ENCODE measurements at regions of chr5 and their contacts with region 1.

Region 1: GRCh38 chr5:95620870-95621837 is 1.3 kb downstream of the GPR150 start:
- DNase-seq: no peak
- ATAC-seq: peak; percentile 73
- H3K4me3 ChIP-seq: peak overlapping the region; percentile 52 to 57
- H3K27ac ChIP-seq: peak overlapping the region; percentile 65
- H3K4me1 ChIP-seq: peaks cover 10% of the 10 kb centered on the region
- H3K27me3 ChIP-seq: no peaks in the 10 kb centered on the region
- CTCF ChIP-seq: peak; percentile 13; the same call in 1 of the 2 replicates

Region 2: GRCh38 chr5:95223566-95224258 is 397.4 kb before region 1 on chr5:
- CTCF ChIA-PET with region 1: no interaction called
- POLR2A ChIA-PET with region 1: no interaction called
- in situ Hi-C with region 1: no loop called
- intact Hi-C with region 1: no loop called
- DNase-seq: no peak
- ATAC-seq: no peak
- H3K4me3 ChIP-seq: no peak overlapping the region
- H3K27ac ChIP-seq: no peak overlapping the region
- H3K4me1 ChIP-seq: no peaks in the 10 kb centered on the region
- H3K27me3 ChIP-seq: no peaks in the 10 kb centered on the region; the same call in 1 of the 2 replicates
- CTCF ChIP-seq: no peak

Region 3: DNA sequence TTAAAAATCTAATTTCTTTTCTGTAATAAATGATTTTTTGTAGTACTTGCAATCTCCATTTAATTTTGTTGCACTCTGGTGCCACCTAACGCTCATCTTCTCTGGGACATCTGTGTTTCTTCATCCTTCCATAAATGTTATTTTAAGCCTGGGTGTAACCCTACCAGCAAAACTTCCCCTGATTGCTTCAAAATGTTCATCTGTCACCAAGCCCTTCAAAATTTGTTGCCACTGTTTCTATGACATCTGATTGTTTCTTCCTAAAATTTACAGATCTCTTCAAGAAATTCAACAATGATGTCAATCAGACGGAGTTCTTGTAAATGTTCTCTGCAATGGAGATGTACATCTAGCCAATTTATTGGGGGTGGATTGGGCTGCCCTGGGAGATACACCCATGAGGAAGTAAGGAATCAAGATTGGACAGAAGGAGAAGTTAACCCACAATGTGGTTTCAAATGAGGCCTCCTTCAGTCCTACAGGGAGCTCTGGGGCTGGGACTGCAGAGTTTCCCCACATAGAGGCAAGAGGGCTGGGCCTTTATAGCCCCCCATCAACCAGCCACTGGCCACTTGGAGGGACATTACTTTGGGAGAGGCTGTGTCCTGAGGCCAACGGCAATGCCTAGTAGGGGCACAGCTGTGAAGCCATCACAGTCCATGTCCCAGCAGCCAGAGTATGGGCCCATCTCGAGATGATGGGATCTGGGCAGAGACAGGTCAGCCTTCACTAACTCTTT is 359.5 kb before region 1 on chr5:
- CTCF ChIA-PET with region 1: no interaction called
- POLR2A ChIA-PET with region 1: no interaction called
- in situ Hi-C with region 1: no loop called
- intact Hi-C with region 1: no loop called
- DNase-seq: peak; percentile 48
- ATAC-seq: peak; percentile 73
- H3K4me3 ChIP-seq: no peak overlapping the region
- H3K27ac ChIP-seq: no peak overlapping the region
- H3K4me1 ChIP-seq: no peaks in the 10 kb centered on the region
- H3K27me3 ChIP-seq: no peaks in the 10 kb centered on the region; the same call in 1 of the 2 replicates
- CTCF ChIP-seq: peak; percentile 73

Region 4: GRCh38 chr5:95554647-95555548 is 66.3 kb before region 1 on chr5 and contains the starts of genes ARSK and SKIC3:
- CTCF ChIA-PET with region 1: no interaction called
- POLR2A ChIA-PET with region 1: interaction called, 8 read pairs
- in situ Hi-C with region 1: no loop called
- intact Hi-C with region 1: loop called (anchors 10 kb)
- DNase-seq: peak; percentile 99
- ATAC-seq: peak; percentile 96
- H3K4me3 ChIP-seq: peak within 1 kb of the TSS; percentile 70 to 89
- H3K27ac ChIP-seq: peak within 1 kb of the TSS; percentile 94
- H3K4me1 ChIP-seq: peaks cover 16% of the 10 kb centered on the region; the same call in 1 of the 2 replicates
- H3K27me3 ChIP-seq: no peaks in the 10 kb centered on the region
- CTCF ChIP-seq: peak; percentile 26
- total RNA-seq, gene ARSK: 13.7 TPM
- total RNA-seq, gene SKIC3: 69.1 TPM

Region 5: GRCh38 chr5:96408276-96408777 is 787.2 kb after region 1 on chr5:
- CTCF ChIA-PET with region 1: no interaction called
- POLR2A ChIA-PET with region 1: interaction called, 13 read pairs
- in situ Hi-C with region 1: no loop called
- intact Hi-C with region 1: no loop called
- DNase-seq: no peak
- ATAC-seq: no peak
- H3K4me3 ChIP-seq: no peak overlapping the region
- H3K27ac ChIP-seq: no peak overlapping the region
- H3K4me1 ChIP-seq: no peaks in the 10 kb centered on the region
- H3K27me3 ChIP-seq: peaks cover 8% of the 10 kb centered on the region; the same call in 1 of the 2 replicates
- CTCF ChIP-seq: no peak